Heart left ventricle (tissue), 16 donors: ENCODE measurements at regions of chr6 and their contacts with region 1.

Region 1: GRCh38 chr6:39088331-39088730 is 26.7 kb downstream of the SAYSD1 start:
- DNase-seq: peak in 4 of 5 donors; percentile 43 to 73 (median 52)
- ATAC-seq: peak; percentile 79 to 95 (median 88)
- H3K4me3 ChIP-seq: no peak overlapping the region
- H3K27ac ChIP-seq: no peak overlapping the region
- H3K4me1 ChIP-seq: peaks cover 0 to 23% (median 10%) of the 10 kb centered on the region in 12 donors
- H3K27me3 ChIP-seq: peaks cover 0 to 11% (median 0%) of the 10 kb centered on the region in 9 donors
- CTCF ChIP-seq: peak; percentile 21 to 64 (median 42)
- POLR2A ChIP-seq: no peak

Region 2: GRCh38 chr6:39143233-39143930 is 55.1 kb after region 1 on chr6:
- intact Hi-C with region 1: no loop called
- DNase-seq: no peak
- ATAC-seq: no peak
- H3K4me3 ChIP-seq: peak overlapping the region in 1 of 12 donors; percentile 0
- H3K27ac ChIP-seq: peak overlapping the region in 4 of 12 donors; percentile 16 to 44 (median 32)
- H3K4me1 ChIP-seq: peaks cover 0 to 8% (median 0%) of the 10 kb centered on the region in 12 donors
- H3K27me3 ChIP-seq: peaks cover 0 to 16% (median 4%) of the 10 kb centered on the region in 9 donors
- CTCF ChIP-seq: no peak
- POLR2A ChIP-seq: no peak

Region 3: DNA sequence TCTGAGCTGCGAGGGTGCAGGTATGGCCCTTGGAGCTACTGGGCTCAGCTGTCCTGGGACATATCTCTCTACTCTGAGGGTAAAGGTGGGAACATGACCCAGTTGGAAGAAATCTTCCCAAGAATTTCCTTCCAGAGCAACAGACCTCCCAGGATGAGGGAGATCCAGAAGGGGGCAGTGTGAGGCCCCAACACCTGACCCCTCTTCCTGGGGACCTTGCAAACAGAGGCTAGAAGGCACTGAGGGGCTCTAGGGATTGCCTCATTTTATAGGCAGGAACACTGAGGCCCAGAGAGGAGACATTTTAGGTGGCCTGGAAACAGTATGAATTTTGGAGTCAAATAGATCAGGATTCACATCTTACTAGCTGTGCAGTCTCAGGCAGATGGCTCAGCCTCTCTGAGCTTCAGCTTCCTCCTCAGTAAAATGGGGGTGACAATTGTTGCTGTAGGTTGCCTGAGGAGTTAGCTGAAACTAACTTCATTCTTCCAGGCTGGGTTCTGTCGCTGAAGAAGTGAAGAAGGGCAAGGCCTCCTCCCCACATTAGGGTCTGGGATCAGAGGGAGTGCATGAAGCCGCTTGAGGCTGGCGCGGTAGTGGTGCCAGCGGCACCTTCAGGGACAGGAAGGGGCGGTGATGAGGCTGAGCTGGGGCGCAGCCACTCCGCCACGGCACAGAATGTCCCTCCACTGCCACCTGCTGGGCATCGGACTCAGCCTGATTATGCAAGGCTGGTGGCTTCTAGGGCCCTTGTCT is 214.5 kb after region 1 on chr6:
- intact Hi-C with region 1: loop called (anchors 2 to 10 kb)
- DNase-seq: peak; percentile 71 to 91 (median 77)
- ATAC-seq: peak; percentile 82 to 93 (median 90)
- H3K4me3 ChIP-seq: no peak overlapping the region
- H3K27ac ChIP-seq: no peak overlapping the region
- H3K4me1 ChIP-seq: peaks cover 0 to 5% (median 0%) of the 10 kb centered on the region in 12 donors
- H3K27me3 ChIP-seq: peaks cover 0 to 19% (median 0%) of the 10 kb centered on the region in 9 donors
- CTCF ChIP-seq: peak; percentile 76 to 90 (median 82)
- POLR2A ChIP-seq: no peak